ENCODE measurements at regions of chr1 and their contacts with region 1.

Region 1: GRCh38 chr1:111139956-111140679 is at the starts of genes CEPT1 and DRAM2:
- DNase-seq: peak; percentile 96
- ATAC-seq: peak; percentile 80
- H3K4me3 ChIP-seq: peak within 1 kb of the TSS; percentile 89 to 96 (median 93)
- H3K4me3 Mint-ChIP-seq: peak within 1 kb of the TSS; percentile 100
- H3K27ac ChIP-seq: peak within 1 kb of the TSS; percentile 84 to 93
- H3K27ac Mint-ChIP-seq: peak within 1 kb of the TSS; percentile 99
- H3K4me1 ChIP-seq: peaks cover 55 to 62% of the 10 kb centered on the region in 2 donors
- H3K4me1 Mint-ChIP-seq: peaks cover 62% of the 10 kb centered on the region
- H3K27me3 ChIP-seq: no peaks in the 10 kb centered on the region
- H3K27me3 Mint-ChIP-seq: no peaks in the 10 kb centered on the region
- CTCF ChIP-seq: no peak
- total RNA-seq, gene CEPT1: 83.5 and 86.5 TPM in 2 replicates
- total RNA-seq, gene DRAM2: 102 and 108 TPM in 2 replicates

Region 2: DNA sequence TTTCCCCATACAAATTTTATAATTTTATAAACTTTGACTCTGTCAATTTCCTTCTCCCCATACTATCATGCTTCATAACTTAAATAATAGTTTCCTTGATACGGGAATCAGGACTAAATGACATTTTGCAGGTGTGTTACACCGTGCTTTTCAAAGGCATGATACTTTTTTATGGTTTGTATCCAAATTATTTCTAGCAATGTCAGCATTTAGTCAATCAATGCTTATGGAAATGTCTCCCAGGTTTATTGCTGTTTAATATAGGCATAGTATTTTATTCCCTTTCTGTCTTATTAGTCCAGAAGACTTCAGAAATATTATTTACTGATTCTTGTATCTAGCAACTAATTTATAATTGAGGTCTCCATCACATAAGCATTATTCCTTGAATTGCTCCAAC is 23.6 kb before region 1 on chr1:
- CTCF ChIA-PET with region 1: no interaction called
- POLR2A ChIA-PET with region 1: no interaction called
- intact Hi-C with region 1: no loop called
- DNase-seq: no peak
- ATAC-seq: no peak
- H3K4me3 ChIP-seq: no peak overlapping the region
- H3K4me3 Mint-ChIP-seq: no peak overlapping the region
- H3K27ac ChIP-seq: peak overlapping the region in 1 of 2 donors; percentile 47
- H3K27ac Mint-ChIP-seq: peak overlapping the region; percentile 26
- H3K4me1 ChIP-seq: no peaks in the 10 kb centered on the region
- H3K4me1 Mint-ChIP-seq: peaks cover 19% of the 10 kb centered on the region
- H3K27me3 ChIP-seq: no peaks in the 10 kb centered on the region
- H3K27me3 Mint-ChIP-seq: no peaks in the 10 kb centered on the region
- CTCF ChIP-seq: no peak

Region 3: DNA sequence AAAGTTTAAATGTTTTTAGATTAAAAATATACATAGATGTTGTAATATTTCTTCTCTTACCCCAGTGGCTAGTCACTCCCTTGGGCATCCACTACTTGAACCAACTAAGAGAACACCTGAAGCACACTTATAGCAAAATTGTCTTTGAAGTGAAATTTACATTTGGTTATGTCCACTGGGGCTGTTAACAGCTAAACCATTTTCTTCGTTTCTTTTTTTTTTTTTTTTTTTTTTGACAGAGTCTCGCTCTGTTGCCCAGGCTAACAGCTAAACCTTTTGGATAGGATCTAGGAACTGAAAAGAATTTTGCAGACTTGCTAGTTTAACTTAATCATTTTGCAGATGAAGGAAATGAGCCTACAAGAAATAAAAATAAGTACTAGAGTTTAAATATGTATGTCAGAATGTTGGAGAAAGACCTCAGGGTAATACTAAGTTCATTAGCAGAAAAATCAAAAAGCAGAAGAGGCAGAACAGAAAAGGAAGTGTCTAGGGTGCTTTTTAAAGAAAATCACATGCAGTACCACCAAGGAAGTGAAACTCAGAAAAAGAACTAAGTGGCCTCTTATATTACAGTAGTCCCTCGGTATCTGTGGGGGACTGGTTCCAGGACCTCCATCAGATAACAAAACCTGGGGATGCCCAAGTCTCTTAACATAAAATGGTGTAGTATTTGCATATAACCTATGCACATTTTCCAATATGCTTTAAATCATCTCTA is 12.0 kb before region 1 on chr1:
- CTCF ChIA-PET with region 1: interaction called, 4 read pairs
- POLR2A ChIA-PET with region 1: interaction called, 23 read pairs
- intact Hi-C with region 1: loop called (anchors 1 kb)
- DNase-seq: peak; percentile 88
- ATAC-seq: peak; percentile 88
- H3K4me3 ChIP-seq: peak overlapping the region in 3 of 5 experiments; percentile 26 to 58 (median 31)
- H3K4me3 Mint-ChIP-seq: peak overlapping the region; percentile 36
- H3K27ac ChIP-seq: peak overlapping the region; percentile 95 to 98
- H3K27ac Mint-ChIP-seq: peak overlapping the region; percentile 72
- H3K4me1 ChIP-seq: peaks cover 79 to 93% of the 10 kb centered on the region in 2 donors
- H3K4me1 Mint-ChIP-seq: peaks cover 83% of the 10 kb centered on the region
- H3K27me3 ChIP-seq: no peaks in the 10 kb centered on the region
- H3K27me3 Mint-ChIP-seq: no peaks in the 10 kb centered on the region
- CTCF ChIP-seq: no peak

Region 4: GRCh38 chr1:111203681-111204200 is 63.6 kb after region 1 on chr1:
- CTCF ChIA-PET with region 1: interaction called, 3 read pairs
- POLR2A ChIA-PET with region 1: interaction called, 6 read pairs
- intact Hi-C with region 1: loop called (anchors 1 kb)
- DNase-seq: peak; percentile 90
- ATAC-seq: peak; percentile 56
- H3K4me3 ChIP-seq: peak overlapping the region; percentile 60 to 87 (median 83)
- H3K4me3 Mint-ChIP-seq: peak overlapping the region; percentile 91
- H3K27ac ChIP-seq: peak overlapping the region; percentile 88 to 96
- H3K27ac Mint-ChIP-seq: peak overlapping the region; percentile 96
- H3K4me1 ChIP-seq: peaks cover 58 to 75% of the 10 kb centered on the region in 2 donors
- H3K4me1 Mint-ChIP-seq: peaks cover 81% of the 10 kb centered on the region
- H3K27me3 ChIP-seq: no peaks in the 10 kb centered on the region
- H3K27me3 Mint-ChIP-seq: no peaks in the 10 kb centered on the region
- CTCF ChIP-seq: no peak

Region 5: GRCh38 chr1:111346089-111346885 is 206.2 kb after region 1 on chr1:
- CTCF ChIA-PET with region 1: no interaction called
- POLR2A ChIA-PET with region 1: interaction called, 3 read pairs
- intact Hi-C with region 1: loop called (anchors 5 kb)
- DNase-seq: peak; percentile 98
- ATAC-seq: peak; percentile 85
- H3K4me3 ChIP-seq: peak overlapping the region; percentile 9 to 75 (median 66)
- H3K4me3 Mint-ChIP-seq: peak overlapping the region; percentile 97
- H3K27ac ChIP-seq: peak overlapping the region; percentile 71 to 78
- H3K27ac Mint-ChIP-seq: peak overlapping the region; percentile 95
- H3K4me1 ChIP-seq: peaks cover 9 to 16% of the 10 kb centered on the region in 2 donors
- H3K4me1 Mint-ChIP-seq: peaks cover 16% of the 10 kb centered on the region
- H3K27me3 ChIP-seq: no peaks in the 10 kb centered on the region
- H3K27me3 Mint-ChIP-seq: no peaks in the 10 kb centered on the region
- CTCF ChIP-seq: no peak

Region 6: DNA sequence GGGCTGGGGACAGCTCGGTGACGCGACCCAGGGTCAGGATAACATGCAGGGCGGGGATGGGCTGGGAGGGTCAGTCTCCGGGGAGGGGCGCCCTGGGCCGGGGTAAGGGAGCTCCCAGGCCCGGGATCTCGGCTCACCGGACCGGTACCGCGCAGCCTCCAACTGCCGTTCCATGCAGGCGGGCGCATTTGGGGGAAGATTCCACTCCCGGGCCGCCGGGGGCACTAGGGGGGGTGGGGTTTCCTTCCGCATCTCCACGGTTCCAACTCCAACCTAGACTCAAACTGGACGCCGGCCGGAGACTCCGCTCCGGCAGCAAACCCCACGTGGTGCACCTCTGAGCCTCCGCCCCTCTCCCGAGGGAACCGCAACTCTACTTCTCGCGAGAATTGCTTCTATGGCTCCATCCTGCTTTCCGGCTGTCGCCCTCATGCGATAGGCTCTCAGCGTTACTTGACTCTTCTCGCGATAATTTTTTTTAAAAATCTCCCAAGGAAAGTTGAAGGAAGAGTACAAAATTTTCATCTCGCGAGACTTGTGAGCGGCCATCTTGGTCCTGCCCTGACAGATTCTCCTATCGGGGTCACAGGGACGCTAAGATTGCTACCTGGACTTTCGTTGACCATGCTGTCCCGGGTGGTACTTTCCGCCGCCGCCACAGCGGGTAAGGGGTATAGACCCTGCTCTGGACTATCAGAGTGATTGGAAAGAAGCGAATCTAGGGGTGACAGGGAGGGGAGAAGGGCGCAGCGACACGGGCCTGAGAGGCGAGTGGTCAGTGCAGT is 309.0 kb after region 1 on chr1 and contains the starts of genes ATP5PB and WDR77:
- CTCF ChIA-PET with region 1: no interaction called
- POLR2A ChIA-PET with region 1: no interaction called
- intact Hi-C with region 1: loop called (anchors 2 kb)
- DNase-seq: peak; percentile 96
- ATAC-seq: peak; percentile 95
- H3K4me3 ChIP-seq: peak within 1 kb of the TSS; percentile 76 to 94 (median 85)
- H3K4me3 Mint-ChIP-seq: peak within 1 kb of the TSS; percentile 100
- H3K27ac ChIP-seq: peak within 1 kb of the TSS; percentile 60 to 95
- H3K27ac Mint-ChIP-seq: peak within 1 kb of the TSS; percentile 99
- H3K4me1 ChIP-seq: peaks cover 41 to 48% of the 10 kb centered on the region in 2 donors
- H3K4me1 Mint-ChIP-seq: peaks cover 73% of the 10 kb centered on the region
- H3K27me3 ChIP-seq: no peaks in the 10 kb centered on the region
- H3K27me3 Mint-ChIP-seq: no peaks in the 10 kb centered on the region
- CTCF ChIP-seq: no peak
- total RNA-seq, gene ATP5PB: 110 and 113 TPM in 2 replicates
- total RNA-seq, gene WDR77: 40.5 and 41.4 TPM in 2 replicates